PC-9 (cell line): ENCODE measurements at regions of chr6 and their contacts with region 1.

Region 1: GRCh38 chr6:39189915-39190544 is 39.2 kb downstream of the KCNK5 start:
- DNase-seq: no peak
- H3K4me3 ChIP-seq: no peak overlapping the region
- H3K27ac ChIP-seq: no peak overlapping the region
- H3K4me1 ChIP-seq: peaks cover 49% of the 10 kb centered on the region
- H3K27me3 ChIP-seq: no peaks in the 10 kb centered on the region
- CTCF ChIP-seq: peak; percentile 71

Region 2: GRCh38 chr6:38043259-38043753 is 1146.7 kb before region 1 on chr6:
- CTCF ChIA-PET with region 1: interaction called, 13 read pairs
- POLR2A ChIA-PET with region 1: no interaction called
- intact Hi-C with region 1: no loop called
- DNase-seq: no peak
- H3K4me3 ChIP-seq: no peak overlapping the region
- H3K27ac ChIP-seq: no peak overlapping the region
- H3K4me1 ChIP-seq: no peaks in the 10 kb centered on the region
- H3K27me3 ChIP-seq: no peaks in the 10 kb centered on the region
- CTCF ChIP-seq: no peak

Region 3: GRCh38 chr6:39203852-39204375 is 13.9 kb after region 1 on chr6:
- CTCF ChIA-PET with region 1: interaction called, 5 read pairs
- POLR2A ChIA-PET with region 1: interaction called, 3 read pairs
- intact Hi-C with region 1: loop called (anchors 1 kb)
- DNase-seq: peak; percentile 97 to 98
- H3K4me3 ChIP-seq: peak overlapping the region; percentile 16; the same call in 1 of the 2 replicates
- H3K27ac ChIP-seq: peak overlapping the region; percentile 95
- H3K4me1 ChIP-seq: peaks cover 96% of the 10 kb centered on the region
- H3K27me3 ChIP-seq: no peaks in the 10 kb centered on the region
- CTCF ChIP-seq: no peak

Region 4: DNA sequence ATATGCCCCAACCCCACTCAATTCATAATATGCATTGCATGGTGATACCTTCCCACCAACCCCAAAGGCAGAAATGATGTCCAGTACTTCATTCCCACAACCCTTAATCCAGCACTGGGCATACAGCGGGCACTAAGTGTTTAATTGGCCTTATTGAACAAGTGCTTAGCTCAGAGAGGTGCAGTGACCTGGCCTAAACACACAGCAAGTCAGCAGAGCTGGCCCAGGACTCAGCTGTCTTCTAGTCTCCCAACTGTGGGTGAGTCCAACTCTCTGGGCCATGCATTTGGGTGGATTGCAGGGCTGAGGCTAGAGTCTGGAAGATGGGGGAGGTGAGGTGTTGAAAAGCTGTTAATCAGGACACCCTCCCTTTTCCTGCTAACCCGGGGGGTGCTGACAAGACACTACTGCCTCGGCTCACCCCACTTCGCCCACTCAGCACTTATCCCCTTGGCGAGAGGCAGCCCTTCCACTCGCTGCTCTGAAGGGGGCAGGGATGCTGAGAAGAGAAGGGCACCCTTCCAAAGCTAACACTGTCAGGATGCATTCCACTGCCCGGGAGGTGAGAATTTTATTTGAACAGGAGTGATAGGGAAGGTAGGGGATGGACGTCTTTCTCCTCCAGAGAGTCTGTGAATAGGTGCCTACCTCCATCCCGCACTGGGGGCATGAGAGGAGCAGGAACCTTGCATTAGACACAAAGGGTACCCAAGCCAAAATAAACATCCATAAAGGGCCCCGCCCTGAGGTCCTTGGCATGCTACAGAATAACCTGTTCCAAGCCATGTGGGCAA is 25.0 kb after region 1 on chr6:
- CTCF ChIA-PET with region 1: no interaction called
- POLR2A ChIA-PET with region 1: no interaction called
- intact Hi-C with region 1: loop called (anchors 1 kb)
- DNase-seq: peak; percentile 80 to 85
- H3K4me3 ChIP-seq: no peak overlapping the region
- H3K27ac ChIP-seq: 0 out of 2 replicates have a peak overlapping the region, but pooled peaks have one; percentile 41
- H3K4me1 ChIP-seq: peaks cover 68% of the 10 kb centered on the region
- H3K27me3 ChIP-seq: no peaks in the 10 kb centered on the region
- CTCF ChIP-seq: no peak

Region 5: DNA sequence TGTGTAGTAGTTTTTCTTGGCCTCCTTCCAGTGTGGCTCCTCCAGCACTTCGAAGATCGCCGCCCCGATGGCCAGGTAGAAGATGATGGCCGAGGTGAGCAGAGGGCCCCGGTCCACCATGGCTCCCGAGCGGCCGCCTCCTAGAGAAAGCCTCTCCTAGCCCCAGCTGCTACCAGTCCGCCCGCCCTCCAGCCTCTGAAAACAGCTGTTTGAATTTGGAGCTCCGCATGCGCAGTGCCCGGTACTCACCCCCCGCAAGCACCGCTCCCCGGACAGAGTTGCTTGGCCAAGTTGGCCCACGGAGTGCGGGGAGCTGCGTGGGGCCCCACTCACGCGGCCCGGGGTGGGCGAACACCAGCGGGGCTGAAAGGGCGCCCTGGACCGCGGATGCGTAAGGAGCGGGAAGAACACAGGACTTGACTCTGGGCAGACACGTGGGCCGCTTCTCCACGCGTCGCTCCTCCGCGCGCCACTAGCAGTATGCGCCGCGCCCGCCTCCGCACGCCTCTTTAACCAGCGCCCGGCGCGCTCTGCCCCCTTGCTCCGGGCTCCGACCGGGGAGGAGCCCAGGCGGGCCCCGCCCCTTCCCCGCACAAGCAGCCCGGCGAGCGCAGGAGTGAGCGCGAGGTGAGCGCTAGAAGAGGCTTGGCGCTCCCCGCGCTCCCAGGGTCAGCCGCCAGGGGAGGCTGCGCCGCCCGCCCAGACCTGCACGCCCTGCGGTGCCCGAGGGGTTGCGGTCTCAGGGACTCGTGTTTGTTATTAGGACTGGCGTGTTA is 39.1 kb after region 1 on chr6 and contains the start of gene KCNK5:
- CTCF ChIA-PET with region 1: interaction called, 11 read pairs
- POLR2A ChIA-PET with region 1: no interaction called
- intact Hi-C with region 1: no loop called
- DNase-seq: peak; percentile 73 to 89
- H3K4me3 ChIP-seq: peak within 1 kb of the TSS; percentile 96
- H3K27ac ChIP-seq: peak within 1 kb of the TSS; percentile 34; the same call in 1 of the 2 replicates
- H3K4me1 ChIP-seq: peaks cover 39% of the 10 kb centered on the region
- H3K27me3 ChIP-seq: no peaks in the 10 kb centered on the region
- CTCF ChIP-seq: peak; percentile 86
- total RNA-seq, gene KCNK5: 11.9 and 14.3 TPM in 2 replicates

Region 6: GRCh38 chr6:39280247-39280731 is 90.3 kb after region 1 on chr6:
- CTCF ChIA-PET with region 1: interaction called, 11 read pairs
- POLR2A ChIA-PET with region 1: no interaction called
- intact Hi-C with region 1: no loop called
- DNase-seq: peak; percentile 82 to 95
- H3K4me3 ChIP-seq: peak overlapping the region; percentile 9; the same call in 1 of the 2 replicates
- H3K27ac ChIP-seq: peak overlapping the region; percentile 94
- H3K4me1 ChIP-seq: peaks cover 43% of the 10 kb centered on the region
- H3K27me3 ChIP-seq: no peaks in the 10 kb centered on the region
- CTCF ChIP-seq: no peak

Region 7: DNA sequence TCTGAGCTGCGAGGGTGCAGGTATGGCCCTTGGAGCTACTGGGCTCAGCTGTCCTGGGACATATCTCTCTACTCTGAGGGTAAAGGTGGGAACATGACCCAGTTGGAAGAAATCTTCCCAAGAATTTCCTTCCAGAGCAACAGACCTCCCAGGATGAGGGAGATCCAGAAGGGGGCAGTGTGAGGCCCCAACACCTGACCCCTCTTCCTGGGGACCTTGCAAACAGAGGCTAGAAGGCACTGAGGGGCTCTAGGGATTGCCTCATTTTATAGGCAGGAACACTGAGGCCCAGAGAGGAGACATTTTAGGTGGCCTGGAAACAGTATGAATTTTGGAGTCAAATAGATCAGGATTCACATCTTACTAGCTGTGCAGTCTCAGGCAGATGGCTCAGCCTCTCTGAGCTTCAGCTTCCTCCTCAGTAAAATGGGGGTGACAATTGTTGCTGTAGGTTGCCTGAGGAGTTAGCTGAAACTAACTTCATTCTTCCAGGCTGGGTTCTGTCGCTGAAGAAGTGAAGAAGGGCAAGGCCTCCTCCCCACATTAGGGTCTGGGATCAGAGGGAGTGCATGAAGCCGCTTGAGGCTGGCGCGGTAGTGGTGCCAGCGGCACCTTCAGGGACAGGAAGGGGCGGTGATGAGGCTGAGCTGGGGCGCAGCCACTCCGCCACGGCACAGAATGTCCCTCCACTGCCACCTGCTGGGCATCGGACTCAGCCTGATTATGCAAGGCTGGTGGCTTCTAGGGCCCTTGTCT is 112.8 kb after region 1 on chr6:
- CTCF ChIA-PET with region 1: no interaction called
- POLR2A ChIA-PET with region 1: no interaction called
- intact Hi-C with region 1: loop called (anchors 1 kb)
- DNase-seq: peak; percentile 56 to 82
- H3K4me3 ChIP-seq: peak overlapping the region; percentile 32; the same call in 1 of the 2 replicates
- H3K27ac ChIP-seq: no peak overlapping the region
- H3K4me1 ChIP-seq: peaks cover 12% of the 10 kb centered on the region
- H3K27me3 ChIP-seq: no peaks in the 10 kb centered on the region
- CTCF ChIP-seq: peak; percentile 92